CD8-positive, alpha-beta T cell (primary cell): ENCODE measurements at regions of chr12 and their contacts with region 1.

Region 1: DNA sequence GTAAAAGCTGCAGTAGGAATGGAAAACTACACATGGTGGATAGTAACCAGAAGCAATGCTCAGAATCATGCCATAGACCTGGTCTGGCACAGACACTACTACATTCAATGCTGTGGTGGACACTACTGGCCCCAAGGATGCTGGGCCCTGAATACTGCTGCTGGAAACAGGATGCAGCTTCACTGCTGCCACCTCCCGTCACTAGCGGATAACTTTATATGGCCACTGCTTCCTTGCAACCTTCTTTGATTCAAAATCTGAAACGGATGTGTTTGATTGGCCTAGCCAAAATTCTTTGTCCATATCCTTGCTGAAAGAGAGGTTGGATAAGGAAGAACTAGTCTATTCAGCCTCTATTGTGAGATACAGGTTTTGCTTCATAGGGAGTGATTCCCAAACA is 30.7 kb downstream of the ADCY6 start:
- DNase-seq: no peak
- ATAC-seq: no peak
- H3K4me3 ChIP-seq: no peak overlapping the region
- H3K4me3 Mint-ChIP-seq: no peak overlapping the region
- H3K27ac ChIP-seq: no peak overlapping the region
- H3K27ac Mint-ChIP-seq: no peak overlapping the region
- H3K4me1 ChIP-seq: no peaks in the 10 kb centered on the region
- H3K4me1 Mint-ChIP-seq: no peaks in the 10 kb centered on the region
- H3K27me3 ChIP-seq: no peaks in the 10 kb centered on the region
- H3K27me3 Mint-ChIP-seq: no peaks in the 10 kb centered on the region
- CTCF ChIP-seq: no peak

Region 2: DNA sequence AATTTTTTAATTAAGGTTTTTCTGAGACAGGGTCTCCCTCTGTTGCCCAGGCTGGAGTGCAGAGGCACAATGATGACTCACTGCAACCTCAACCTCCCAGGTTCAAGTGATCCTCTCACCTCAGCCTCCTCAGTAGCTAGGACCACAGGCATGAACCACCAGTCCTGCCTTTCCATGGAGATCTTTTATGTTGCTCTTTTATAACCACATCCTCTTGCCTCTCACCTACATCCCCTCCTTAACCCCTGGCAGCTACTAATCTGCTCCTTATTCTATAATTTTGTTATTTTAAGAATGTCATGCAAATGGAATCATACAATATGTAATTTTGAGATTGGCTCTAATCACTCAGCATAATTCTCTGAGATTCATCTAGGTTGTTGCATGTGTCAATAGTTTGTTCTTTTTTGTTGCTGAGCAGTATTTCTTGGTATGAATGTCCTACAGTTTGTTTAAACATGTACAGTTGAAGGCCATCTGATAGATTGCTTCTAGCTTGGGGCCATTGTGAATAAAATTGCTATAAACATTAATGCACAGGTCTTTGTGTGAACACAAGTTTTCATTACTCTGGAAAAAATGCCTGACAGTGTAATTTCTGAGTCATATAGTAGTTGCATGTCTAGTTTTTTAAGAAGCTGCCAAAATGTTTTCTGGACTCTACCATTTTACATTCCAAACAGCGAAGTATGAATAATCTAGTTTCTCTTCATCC is 1429.2 kb before region 1 on chr12:
- CTCF ChIA-PET with region 1: no interaction called
- POLR2A ChIA-PET with region 1: no interaction called
- intact Hi-C with region 1: no loop called
- DNase-seq: no peak
- ATAC-seq: peak; percentile 23
- H3K4me3 ChIP-seq: no peak overlapping the region
- H3K4me3 Mint-ChIP-seq: no peak overlapping the region
- H3K27ac ChIP-seq: no peak overlapping the region
- H3K27ac Mint-ChIP-seq: no peak overlapping the region
- H3K4me1 ChIP-seq: peaks cover 8% of the 10 kb centered on the region
- H3K4me1 Mint-ChIP-seq: peaks cover 26% of the 10 kb centered on the region
- H3K27me3 ChIP-seq: no peaks in the 10 kb centered on the region
- H3K27me3 Mint-ChIP-seq: no peaks in the 10 kb centered on the region
- CTCF ChIP-seq: no peak

Region 3: GRCh38 chr12:48773686-48774085 is 15.5 kb after region 1 on chr12:
- CTCF ChIA-PET with region 1: interaction called, 11 read pairs
- POLR2A ChIA-PET with region 1: no interaction called
- intact Hi-C with region 1: no loop called
- DNase-seq: no peak
- ATAC-seq: no peak
- H3K4me3 ChIP-seq: no peak overlapping the region
- H3K4me3 Mint-ChIP-seq: no peak overlapping the region
- H3K27ac ChIP-seq: no peak overlapping the region
- H3K27ac Mint-ChIP-seq: no peak overlapping the region
- H3K4me1 ChIP-seq: no peaks in the 10 kb centered on the region
- H3K4me1 Mint-ChIP-seq: no peaks in the 10 kb centered on the region
- H3K27me3 ChIP-seq: no peaks in the 10 kb centered on the region
- H3K27me3 Mint-ChIP-seq: no peaks in the 10 kb centered on the region
- CTCF ChIP-seq: no peak